HEK293 (cell line): ENCODE measurements at regions of chr5 and their contacts with region 1.

Region 1: GRCh38 chr5:127892467-127893207 is 189.4 kb downstream of the CCDC192 start:
- H3K4me3 ChIP-seq: no peak overlapping the region
- H3K27ac ChIP-seq: peak overlapping the region; percentile 17; the same call in 1 of the 2 replicates
- H3K4me1 ChIP-seq: peaks cover 13% of the 10 kb centered on the region
- CTCF ChIP-seq: no peak

Region 2: GRCh38 chr5:127732963-127733362 is 159.7 kb before region 1 on chr5:
- CTCF ChIA-PET with region 1: no interaction called
- POLR2A ChIA-PET with region 1: no interaction called
- H3K4me3 ChIP-seq: no peak overlapping the region
- H3K27ac ChIP-seq: no peak overlapping the region
- H3K4me1 ChIP-seq: no peaks in the 10 kb centered on the region
- CTCF ChIP-seq: no peak

Region 3: GRCh38 chr5:127875235-127876021 is 17.2 kb before region 1 on chr5:
- CTCF ChIA-PET with region 1: interaction called, 12 read pairs
- POLR2A ChIA-PET with region 1: no interaction called
- H3K4me3 ChIP-seq: no peak overlapping the region
- H3K27ac ChIP-seq: peak overlapping the region; percentile 64
- H3K4me1 ChIP-seq: peaks cover 6% of the 10 kb centered on the region
- CTCF ChIP-seq: peak; percentile 87